Activated CD4-positive, alpha-beta T cell treated with anti-CD3 and anti-CD28 coated beads for 36 hours (primary cell): ENCODE measurements at regions of chr15 and their contacts with region 1.

Region 1: DNA sequence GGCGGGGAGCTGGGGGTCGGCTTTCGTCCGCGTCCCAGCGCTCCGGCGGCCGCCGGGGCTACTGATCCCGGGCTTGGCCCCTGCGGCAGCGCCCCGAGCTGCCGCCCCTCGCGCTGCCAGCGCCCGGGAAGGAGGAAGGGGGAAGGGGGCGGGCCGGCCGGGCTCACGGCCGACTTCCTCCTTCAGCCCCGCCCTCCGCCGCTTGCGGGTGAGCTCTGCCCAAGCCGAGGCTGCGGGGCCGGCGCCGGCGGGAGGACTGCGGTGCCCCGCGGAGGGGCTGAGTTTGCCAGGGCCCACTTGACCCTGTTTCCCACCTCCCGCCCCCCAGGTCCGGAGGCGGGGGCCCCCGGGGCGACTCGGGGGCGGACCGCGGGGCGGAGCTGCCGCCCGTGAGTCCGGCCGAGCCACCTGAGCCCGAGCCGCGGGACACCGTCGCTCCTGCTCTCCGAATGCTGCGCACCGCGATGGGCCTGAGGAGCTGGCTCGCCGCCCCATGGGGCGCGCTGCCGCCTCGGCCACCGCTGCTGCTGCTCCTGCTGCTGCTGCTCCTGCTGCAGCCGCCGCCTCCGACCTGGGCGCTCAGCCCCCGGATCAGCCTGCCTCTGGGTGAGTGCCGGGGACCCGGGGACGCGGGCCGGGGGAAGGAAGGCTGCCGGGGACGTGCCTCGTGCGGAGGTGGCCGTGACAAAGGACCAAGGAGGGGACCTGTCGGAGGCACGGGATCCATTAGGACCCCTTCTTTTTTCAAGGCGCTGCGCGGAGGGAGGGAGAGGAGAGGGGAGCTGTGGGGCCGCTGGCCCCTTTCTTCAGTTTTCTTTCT is at the start of gene SEMA4B:
- DNase-seq: peak; percentile 81
- ATAC-seq: peak; percentile 93
- H3K4me3 Mint-ChIP-seq: peak within 1 kb of the TSS; percentile 78
- H3K27ac Mint-ChIP-seq: peak within 1 kb of the TSS; percentile 77
- H3K4me1 Mint-ChIP-seq: peaks cover 9% of the 10 kb centered on the region
- H3K27me3 Mint-ChIP-seq: no peaks in the 10 kb centered on the region
- total RNA-seq, gene SEMA4B: 12.5 to 15.8 TPM

Region 2: DNA sequence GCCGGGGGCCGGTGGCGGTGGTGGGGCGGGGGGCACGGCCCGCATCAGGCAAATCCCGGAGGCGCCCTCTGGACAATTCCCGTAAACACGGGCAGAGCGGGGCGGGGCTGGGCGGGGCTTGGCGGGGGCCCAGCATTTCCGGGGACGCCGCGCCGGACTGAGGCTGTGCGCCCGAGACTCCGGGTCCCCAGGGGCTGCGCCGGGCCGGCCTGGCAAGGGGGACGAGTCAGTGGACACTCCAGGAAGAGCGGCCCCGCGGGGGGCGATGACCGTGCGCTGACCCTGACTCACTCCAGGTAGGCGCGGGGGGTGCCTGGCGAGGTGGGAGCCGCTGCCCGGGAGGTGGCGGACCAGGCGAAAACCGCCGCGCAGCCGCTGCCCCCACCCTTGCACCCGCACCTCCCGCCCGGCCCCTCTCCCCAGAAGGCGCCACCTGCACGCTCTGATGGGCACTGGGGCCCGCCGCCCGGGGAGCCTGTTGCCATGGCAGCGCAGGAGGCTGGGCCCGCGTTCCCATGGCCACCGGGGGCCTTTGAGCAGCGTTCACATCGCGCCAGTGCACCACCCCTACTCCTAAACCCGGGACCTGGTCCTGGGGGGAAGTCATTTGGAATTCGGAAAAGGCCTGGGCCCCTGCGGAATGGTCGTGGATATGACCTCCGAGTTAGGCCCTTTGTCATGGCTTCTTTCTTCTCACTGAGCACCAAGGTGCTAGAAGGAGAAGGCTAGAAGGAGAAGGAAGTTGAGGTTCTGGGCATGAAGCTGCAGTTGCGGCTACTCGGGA is 16.4 kb before region 1 on chr15:
- CTCF ChIA-PET with region 1: interaction called, 5 read pairs
- POLR2A ChIA-PET with region 1: no interaction called
- intact Hi-C with region 1: loop called in 1 of 2 experiments (anchors 1 kb)
- DNase-seq: peak; percentile 78
- ATAC-seq: peak; percentile 81
- H3K4me3 Mint-ChIP-seq: peak overlapping the region; percentile 77
- H3K27ac Mint-ChIP-seq: peak overlapping the region; percentile 64
- H3K4me1 Mint-ChIP-seq: peaks cover 12% of the 10 kb centered on the region
- H3K27me3 Mint-ChIP-seq: no peaks in the 10 kb centered on the region

Region 3: GRCh38 chr15:90239371-90239770 is 38.0 kb after region 1 on chr15:
- CTCF ChIA-PET with region 1: no interaction called
- POLR2A ChIA-PET with region 1: no interaction called
- intact Hi-C with region 1: no loop called
- DNase-seq: peak; percentile 20
- ATAC-seq: peak; percentile 23
- H3K4me3 Mint-ChIP-seq: no peak overlapping the region
- H3K27ac Mint-ChIP-seq: peak overlapping the region; percentile 52
- H3K4me1 Mint-ChIP-seq: peaks cover 11% of the 10 kb centered on the region
- H3K27me3 Mint-ChIP-seq: no peaks in the 10 kb centered on the region

Region 4: GRCh38 chr15:90265271-90266060 is 64.1 kb after region 1 on chr15 and contains the start of gene NGRN:
- CTCF ChIA-PET with region 1: no interaction called
- POLR2A ChIA-PET with region 1: interaction called, 5 read pairs
- intact Hi-C with region 1: loop called in 1 of 2 experiments (anchors 2 kb)
- DNase-seq: peak; percentile 95
- ATAC-seq: peak; percentile 87
- H3K4me3 Mint-ChIP-seq: peak within 1 kb of the TSS; percentile 98
- H3K27ac Mint-ChIP-seq: peak within 1 kb of the TSS; percentile 99
- H3K4me1 Mint-ChIP-seq: peaks cover 37% of the 10 kb centered on the region
- H3K27me3 Mint-ChIP-seq: no peaks in the 10 kb centered on the region
- total RNA-seq, gene NGRN: 22.0 to 23.9 TPM